A549 (cell line): ENCODE measurements at regions of chr7 and their contacts with region 1.

Region 1: GRCh38 chr7:74417419-74417971 is 36.2 kb upstream of the GTF2IRD1 start:
- DNase-seq: peak; percentile 77 to 95
- ATAC-seq: peak; percentile 94 to 97
- H3K4me3 ChIP-seq: no peak overlapping the region
- H3K27ac ChIP-seq: peak overlapping the region; percentile 70 to 81
- H3K4me1 ChIP-seq: peaks cover 9% of the 10 kb centered on the region
- CTCF ChIP-seq: peak; percentile 93
- EP300 ChIP-seq: no peak
- POLR2A ChIP-seq: no peak
- RAD21 ChIP-seq: peak; percentile 99

Region 2: DNA sequence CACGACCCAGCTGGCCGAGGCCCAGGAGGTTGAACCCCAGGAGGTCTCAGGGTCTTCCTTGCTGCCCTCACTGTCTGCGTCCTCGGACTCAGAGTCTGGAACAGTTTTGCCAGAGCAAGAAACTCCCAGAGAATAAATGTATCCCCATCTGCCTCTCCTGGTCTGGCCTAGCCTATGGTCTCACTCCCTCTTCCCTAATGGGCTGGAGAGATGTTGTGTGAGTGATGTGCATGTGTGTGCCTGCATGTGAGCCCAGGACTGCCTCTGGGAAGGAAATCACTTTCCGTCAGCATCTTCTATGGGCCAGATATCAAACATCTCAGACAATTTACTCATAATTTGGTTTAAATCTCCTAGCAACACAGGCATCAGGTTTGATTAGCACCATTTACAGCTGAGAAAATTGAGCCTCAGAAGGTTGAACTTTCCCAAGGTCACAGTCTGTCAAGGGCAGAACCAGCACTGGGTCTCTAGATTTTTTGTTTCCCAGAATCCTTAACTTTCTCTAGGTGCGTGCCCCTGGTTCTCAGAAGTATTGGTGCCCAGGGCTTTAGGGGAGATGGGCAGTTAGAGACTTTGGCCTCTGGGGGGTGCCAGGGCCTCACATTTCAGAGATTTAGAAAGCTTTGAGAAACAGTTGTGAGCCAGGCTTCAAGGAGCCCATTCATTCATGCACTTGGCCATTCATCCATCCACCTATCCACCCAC is 551.6 kb before region 1 on chr7:
- CTCF ChIA-PET with region 1: no interaction called
- POLR2A ChIA-PET with region 1: no interaction called
- DNase-seq: peak; percentile 58 to 63
- ATAC-seq: peak; percentile 76 to 86; a peak in 4 of 6 replicates
- H3K4me3 ChIP-seq: no peak overlapping the region
- H3K27ac ChIP-seq: no peak overlapping the region
- H3K4me1 ChIP-seq: peaks cover 10% of the 10 kb centered on the region; the same call in 2 of the 3 replicates
- CTCF ChIP-seq: peak; percentile 81
- EP300 ChIP-seq: no peak
- POLR2A ChIP-seq: no peak
- RAD21 ChIP-seq: peak; percentile 88 to 91

Region 3: DNA sequence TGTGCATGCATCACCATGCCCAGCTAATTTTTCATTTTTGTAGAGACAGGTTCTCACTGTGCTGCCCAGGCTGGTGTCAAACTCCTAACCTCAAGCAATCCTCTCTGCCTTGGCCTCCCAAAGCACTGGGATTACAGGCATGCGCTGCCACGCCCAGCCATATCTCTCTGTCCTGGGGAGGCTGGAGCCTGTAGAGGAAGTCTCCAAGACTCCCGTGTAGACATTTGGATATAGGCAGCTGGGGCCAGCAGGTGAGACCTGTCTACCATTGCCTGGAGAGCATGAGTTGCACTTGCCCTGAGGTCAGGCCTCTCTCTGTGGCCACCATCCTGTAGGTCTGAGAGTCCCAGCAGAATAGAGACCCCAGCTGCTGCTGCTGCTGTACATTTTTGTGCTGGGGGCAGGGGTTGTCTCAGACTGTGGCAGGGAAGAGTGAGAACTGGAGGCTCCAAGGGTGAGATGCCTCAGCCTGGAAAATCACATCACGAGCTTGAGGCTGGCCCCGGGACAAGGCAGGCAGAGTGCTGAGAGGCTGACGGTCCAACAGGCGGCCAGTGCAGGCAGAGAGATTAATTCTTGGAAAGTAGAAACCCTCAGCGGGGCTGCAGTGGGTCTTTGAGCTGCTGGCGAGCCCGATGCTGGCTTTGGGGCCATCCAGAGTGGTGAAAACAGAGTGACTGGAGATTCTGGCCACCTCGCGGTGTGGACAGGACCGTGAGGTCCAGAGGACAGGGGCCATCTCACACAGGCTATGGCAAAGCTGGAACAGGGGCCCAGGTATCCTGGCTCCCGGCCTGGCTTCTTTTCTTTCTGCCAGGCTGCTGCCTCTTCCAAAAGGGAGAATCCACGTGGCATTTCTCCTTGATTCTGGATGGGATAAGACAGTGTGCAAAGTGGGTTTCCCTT is 495.6 kb before region 1 on chr7:
- CTCF ChIA-PET with region 1: no interaction called
- POLR2A ChIA-PET with region 1: no interaction called
- DNase-seq: no peak
- ATAC-seq: peak; percentile 28 to 64; a peak in 5 of 6 replicates
- H3K4me3 ChIP-seq: no peak overlapping the region
- H3K27ac ChIP-seq: no peak overlapping the region
- H3K4me1 ChIP-seq: no peaks in the 10 kb centered on the region
- CTCF ChIP-seq: no peak
- EP300 ChIP-seq: no peak
- POLR2A ChIP-seq: no peak
- RAD21 ChIP-seq: no peak

Region 4: DNA sequence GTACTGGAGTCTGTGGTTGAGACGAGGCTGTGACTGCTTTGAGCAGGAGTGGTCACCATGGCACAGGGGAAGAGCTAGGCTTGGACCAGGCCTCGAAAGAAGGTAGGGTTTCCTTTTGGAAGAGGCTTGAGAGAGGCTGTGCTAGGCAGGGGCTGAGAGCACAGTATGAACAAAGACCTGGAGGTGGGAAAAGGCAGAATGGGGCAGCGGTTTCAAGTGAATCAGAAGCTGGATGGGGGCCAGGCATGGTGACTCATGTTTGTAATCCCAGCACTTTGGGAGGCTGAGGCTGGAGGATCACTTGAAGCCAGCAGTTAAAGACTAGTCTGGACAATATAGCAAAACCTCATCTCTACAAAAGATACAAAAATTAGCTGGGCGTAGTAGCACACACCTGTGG is 62.4 kb before region 1 on chr7:
- CTCF ChIA-PET with region 1: no interaction called
- POLR2A ChIA-PET with region 1: no interaction called
- DNase-seq: peak; percentile 47 to 73
- ATAC-seq: peak; percentile 63 to 70
- H3K4me3 ChIP-seq: no peak overlapping the region
- H3K27ac ChIP-seq: peak overlapping the region; percentile 25 to 73; a peak in 4 of 6 replicates
- H3K4me1 ChIP-seq: peaks cover 6% of the 10 kb centered on the region
- CTCF ChIP-seq: no peak
- EP300 ChIP-seq: no peak
- POLR2A ChIP-seq: no peak
- RAD21 ChIP-seq: no peak

Region 5: DNA sequence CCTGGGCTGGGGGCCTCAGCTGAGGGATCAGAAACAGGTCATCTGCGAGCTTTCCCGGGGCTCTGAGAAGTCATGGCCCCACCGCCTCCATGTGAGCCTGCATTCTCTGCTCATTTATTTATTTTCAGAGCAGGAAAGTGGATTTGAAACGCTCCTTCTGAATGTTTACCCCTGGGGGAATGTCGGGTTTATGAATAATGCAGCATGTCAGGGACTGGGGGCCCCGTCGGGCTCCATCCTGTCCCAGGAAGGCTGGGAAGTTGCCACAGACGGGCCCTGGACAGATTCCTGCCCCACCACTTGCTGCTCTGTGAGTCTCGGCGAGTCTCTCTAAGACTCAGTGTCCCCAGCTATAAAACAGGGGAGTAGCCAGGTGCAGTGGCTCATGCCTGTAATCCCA is 24.3 kb after region 1 on chr7:
- CTCF ChIA-PET with region 1: interaction called, 11 read pairs
- POLR2A ChIA-PET with region 1: no interaction called
- DNase-seq: no peak
- ATAC-seq: peak in 1 of 2 experiments; percentile 17; a peak in 2 of 6 replicates
- H3K4me3 ChIP-seq: no peak overlapping the region
- H3K27ac ChIP-seq: peak overlapping the region in 1 of 2 experiments; percentile 51; a peak in 1 of 6 replicates
- H3K4me1 ChIP-seq: 0 out of 3 replicates have a peak, but pooled peaks cover 3% of the 10 kb centered on the region
- CTCF ChIP-seq: no peak
- EP300 ChIP-seq: no peak
- POLR2A ChIP-seq: no peak
- RAD21 ChIP-seq: no peak

Region 6: DNA sequence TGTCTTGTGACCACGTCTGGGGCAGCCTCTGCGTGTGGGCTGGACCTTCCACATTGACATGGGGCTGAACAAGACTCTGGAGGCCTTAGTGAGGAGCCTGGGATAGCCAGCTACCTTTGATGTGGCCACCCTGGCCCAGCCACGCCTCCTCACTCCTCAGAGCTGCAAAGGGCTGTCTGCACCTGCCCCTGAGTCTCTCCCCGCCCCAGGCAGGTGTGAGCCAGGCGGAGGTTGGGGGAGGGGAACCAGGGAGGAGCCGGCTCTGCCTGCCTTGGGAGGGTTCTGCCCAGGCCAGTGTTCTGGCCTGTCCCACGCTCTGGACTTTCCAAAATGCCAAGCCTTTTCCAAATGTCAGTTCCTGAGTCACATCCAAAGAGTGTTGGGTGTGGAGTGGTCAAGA is 108.4 kb after region 1 on chr7:
- CTCF ChIA-PET with region 1: no interaction called
- POLR2A ChIA-PET with region 1: no interaction called
- DNase-seq: no peak
- ATAC-seq: no peak; a peak in 1 of 6 replicates
- H3K4me3 ChIP-seq: no peak overlapping the region
- H3K27ac ChIP-seq: 0 out of 6 replicates have a peak overlapping the region, but pooled peaks of 1 of the 2 experiments have one; percentile 4
- H3K4me1 ChIP-seq: no peaks in the 10 kb centered on the region
- CTCF ChIP-seq: no peak
- EP300 ChIP-seq: no peak
- POLR2A ChIP-seq: no peak
- RAD21 ChIP-seq: no peak

Region 7: DNA sequence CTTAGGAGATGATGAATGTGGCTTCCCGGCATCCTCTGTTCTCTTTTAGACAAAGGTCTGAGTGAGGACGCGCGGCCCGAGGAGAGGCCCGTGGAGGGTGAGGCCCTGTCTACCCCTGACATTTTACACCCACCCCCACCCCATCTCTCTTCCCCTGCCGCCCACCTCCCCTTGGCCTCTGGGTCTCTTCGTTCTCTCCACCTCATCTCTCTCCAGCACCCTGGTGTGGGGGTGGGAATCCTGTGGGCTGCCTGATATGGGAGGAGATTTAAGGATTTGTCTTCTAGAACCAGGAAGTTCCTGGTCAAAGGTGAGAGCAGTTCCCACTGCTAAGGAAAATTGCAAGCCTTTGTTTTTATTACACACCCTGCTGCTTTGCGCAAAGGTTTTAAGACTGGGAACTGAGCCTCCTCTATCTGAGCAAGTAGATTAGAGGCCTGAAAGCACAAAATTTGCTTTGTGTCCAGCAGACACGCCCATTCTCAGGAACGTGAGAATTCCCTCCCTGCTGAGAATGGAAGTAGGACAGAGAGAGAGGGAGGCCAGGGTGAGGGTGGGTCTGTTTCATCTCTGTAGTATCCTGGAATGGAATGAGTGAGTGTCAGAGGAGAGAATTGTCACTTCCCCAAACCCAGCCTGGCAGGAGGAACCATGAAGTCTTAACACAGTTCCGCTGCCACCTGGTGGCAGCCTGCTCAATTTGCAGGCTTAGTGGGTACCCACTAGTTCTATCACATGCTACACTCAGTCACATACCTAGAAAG is 127.4 kb after region 1 on chr7:
- CTCF ChIA-PET with region 1: interaction called, 10 read pairs
- POLR2A ChIA-PET with region 1: no interaction called
- DNase-seq: peak; percentile 42 to 76
- ATAC-seq: peak; percentile 83 to 87
- H3K4me3 ChIP-seq: no peak overlapping the region
- H3K27ac ChIP-seq: peak overlapping the region; percentile 30 to 51; a peak in 4 of 6 replicates
- H3K4me1 ChIP-seq: no peaks in the 10 kb centered on the region
- CTCF ChIP-seq: peak; percentile 53
- EP300 ChIP-seq: no peak
- POLR2A ChIP-seq: no peak
- RAD21 ChIP-seq: peak; percentile 62 to 70

Region 8: GRCh38 chr7:74569501-74570075 is 152.1 kb after region 1 on chr7:
- CTCF ChIA-PET with region 1: interaction called, 85 read pairs
- POLR2A ChIA-PET with region 1: no interaction called
- DNase-seq: no peak
- ATAC-seq: no peak
- H3K4me3 ChIP-seq: no peak overlapping the region
- H3K27ac ChIP-seq: peak overlapping the region; percentile 71 to 82
- H3K4me1 ChIP-seq: peaks cover 30% of the 10 kb centered on the region
- CTCF ChIP-seq: no peak
- EP300 ChIP-seq: no peak
- POLR2A ChIP-seq: no peak
- RAD21 ChIP-seq: no peak